CD4-positive, alpha-beta memory T cell (primary cell): ENCODE measurements at regions of chr3 and their contacts with region 1.

Region 1: GRCh38 chr3:41881233-41881821 is 80.6 kb downstream of the ULK4 start:
- DNase-seq: peak in 4 of 5 donors; percentile 36 to 53 (median 42)
- H3K4me3 ChIP-seq: no peak overlapping the region
- H3K4me3 Mint-ChIP-seq: no peak overlapping the region
- H3K27ac ChIP-seq: no peak overlapping the region
- H3K27ac Mint-ChIP-seq: no peak overlapping the region
- H3K4me1 ChIP-seq: no peaks in the 10 kb centered on the region
- H3K4me1 Mint-ChIP-seq: no peaks in the 10 kb centered on the region
- H3K27me3 ChIP-seq: no peaks in the 10 kb centered on the region
- H3K27me3 Mint-ChIP-seq: no peaks in the 10 kb centered on the region

Region 2: GRCh38 chr3:40191850-40192448 is 1689.4 kb before region 1 on chr3:
- CTCF ChIA-PET with region 1: interaction called, 5 read pairs
- POLR2A ChIA-PET with region 1: no interaction called
- intact Hi-C with region 1: loop called (anchors 2 kb)
- DNase-seq: peak in 4 of 5 donors; percentile 30 to 56 (median 40)
- H3K4me3 ChIP-seq: no peak overlapping the region
- H3K4me3 Mint-ChIP-seq: no peak overlapping the region
- H3K27ac ChIP-seq: no peak overlapping the region
- H3K27ac Mint-ChIP-seq: no peak overlapping the region
- H3K4me1 ChIP-seq: no peaks in the 10 kb centered on the region
- H3K4me1 Mint-ChIP-seq: peaks cover 0 to 2% (median 0%) of the 10 kb centered on the region in 4 donors
- H3K27me3 ChIP-seq: no peaks in the 10 kb centered on the region
- H3K27me3 Mint-ChIP-seq: no peaks in the 10 kb centered on the region

Region 3: GRCh38 chr3:40329071-40329470 is 1552.3 kb before region 1 on chr3:
- CTCF ChIA-PET with region 1: interaction called, 42 read pairs
- POLR2A ChIA-PET with region 1: no interaction called
- intact Hi-C with region 1: loop called (anchors 1 kb)
- DNase-seq: no peak
- H3K4me3 ChIP-seq: no peak overlapping the region
- H3K4me3 Mint-ChIP-seq: no peak overlapping the region
- H3K27ac ChIP-seq: no peak overlapping the region
- H3K27ac Mint-ChIP-seq: no peak overlapping the region
- H3K4me1 ChIP-seq: no peaks in the 10 kb centered on the region
- H3K4me1 Mint-ChIP-seq: peaks cover 3 to 4% (median 4%) of the 10 kb centered on the region in 4 donors
- H3K27me3 ChIP-seq: no peaks in the 10 kb centered on the region
- H3K27me3 Mint-ChIP-seq: peaks cover 3% of the 10 kb centered on the region in 2 donors